SK-MEL-5 (cell line): ENCODE measurements at regions of chr17 and their contacts with region 1.

Region 1: GRCh38 chr17:78013683-78014467 is 55.4 kb downstream of the TNRC6C start:
- DNase-seq: peak; percentile 91

Region 2: DNA sequence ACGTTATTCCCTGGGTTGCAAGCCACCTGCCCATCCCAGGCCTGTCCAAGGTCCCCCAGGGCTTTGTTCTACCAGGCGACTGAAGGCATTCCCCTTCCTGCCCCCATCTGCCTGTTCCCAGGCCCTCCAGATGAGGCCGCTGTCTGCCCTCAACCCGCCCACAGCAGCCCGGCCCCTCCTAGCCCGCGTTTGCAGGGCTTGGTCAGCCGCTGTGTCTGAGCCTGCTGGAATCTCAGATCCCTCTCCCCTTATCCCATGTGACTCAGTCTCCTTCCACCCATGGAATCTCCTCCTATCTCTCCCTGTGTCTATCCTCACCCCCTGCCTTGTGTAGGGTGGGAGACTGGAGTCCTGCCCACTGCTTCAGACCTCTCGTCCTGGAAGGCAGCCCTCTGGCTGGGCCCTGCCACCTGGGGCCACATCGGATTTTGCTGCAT is 241.4 kb before region 1 on chr17:
- in situ Hi-C with region 1: loop called (anchors 25 kb)
- DNase-seq: peak; percentile 89

Region 3: DNA sequence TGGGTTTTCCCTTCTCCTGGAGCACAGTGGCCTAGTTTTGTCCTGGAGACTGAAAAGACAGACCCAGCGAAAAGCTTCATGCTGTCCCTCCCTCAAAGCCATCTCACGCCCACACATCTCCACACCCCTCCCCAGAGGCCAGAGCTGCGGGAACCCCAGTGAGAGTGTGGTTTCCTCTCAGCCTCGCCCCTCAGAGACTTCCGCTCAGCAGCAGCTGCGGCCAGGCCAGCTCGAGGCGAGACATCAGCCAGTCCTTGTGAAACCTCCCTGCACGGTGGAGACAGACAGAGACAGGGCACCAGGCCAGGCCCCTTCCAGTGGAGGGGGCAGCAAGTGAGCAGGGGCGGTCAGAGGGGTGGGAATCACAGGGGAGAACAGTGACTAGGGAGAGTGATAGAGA is 132.3 kb before region 1 on chr17:
- in situ Hi-C with region 1: loop called (anchors 25 kb)
- DNase-seq: peak; percentile 26

Region 4: DNA sequence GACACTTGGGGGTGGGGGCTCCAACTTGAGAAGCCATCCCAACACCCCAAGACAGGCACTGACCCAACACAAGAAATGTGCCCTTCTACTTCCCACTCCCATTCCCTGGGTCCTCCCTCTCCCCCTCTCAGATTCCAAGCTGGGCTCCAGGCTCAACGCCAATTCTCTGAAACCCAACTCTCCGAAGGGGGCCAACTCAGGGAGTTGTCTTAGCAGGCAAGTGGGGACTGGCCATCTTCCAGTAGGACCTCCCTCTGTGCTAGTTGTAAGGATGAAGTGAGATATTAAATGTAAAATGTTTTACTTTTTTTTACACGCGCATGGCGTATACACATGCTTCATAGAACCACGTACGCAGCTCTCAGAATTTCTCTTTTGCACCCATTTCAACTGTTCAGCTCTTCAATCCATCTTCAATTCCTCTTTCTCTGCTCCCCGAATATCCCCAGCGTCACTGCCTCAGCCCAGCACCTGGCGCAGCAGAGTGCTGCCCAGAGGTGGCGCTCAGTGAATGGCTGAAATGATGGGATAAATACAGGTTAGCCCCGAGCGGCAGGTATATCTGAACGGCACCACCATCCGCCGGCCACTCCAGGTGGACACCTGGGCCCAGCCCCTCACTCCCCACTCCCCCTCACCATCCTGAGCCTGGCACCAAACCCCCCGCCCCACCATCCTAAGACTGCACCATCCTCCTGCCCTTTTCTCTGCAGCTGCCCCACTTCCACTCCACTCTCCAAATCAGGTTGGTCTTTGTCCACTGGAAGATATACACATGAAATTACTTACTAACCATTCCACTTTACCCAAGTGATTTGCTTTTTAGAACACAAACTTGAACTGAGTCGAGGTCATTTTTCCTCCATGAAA is 99.3 kb before region 1 on chr17:
- in situ Hi-C with region 1: no loop called
- DNase-seq: peak; percentile 45

Region 5: DNA sequence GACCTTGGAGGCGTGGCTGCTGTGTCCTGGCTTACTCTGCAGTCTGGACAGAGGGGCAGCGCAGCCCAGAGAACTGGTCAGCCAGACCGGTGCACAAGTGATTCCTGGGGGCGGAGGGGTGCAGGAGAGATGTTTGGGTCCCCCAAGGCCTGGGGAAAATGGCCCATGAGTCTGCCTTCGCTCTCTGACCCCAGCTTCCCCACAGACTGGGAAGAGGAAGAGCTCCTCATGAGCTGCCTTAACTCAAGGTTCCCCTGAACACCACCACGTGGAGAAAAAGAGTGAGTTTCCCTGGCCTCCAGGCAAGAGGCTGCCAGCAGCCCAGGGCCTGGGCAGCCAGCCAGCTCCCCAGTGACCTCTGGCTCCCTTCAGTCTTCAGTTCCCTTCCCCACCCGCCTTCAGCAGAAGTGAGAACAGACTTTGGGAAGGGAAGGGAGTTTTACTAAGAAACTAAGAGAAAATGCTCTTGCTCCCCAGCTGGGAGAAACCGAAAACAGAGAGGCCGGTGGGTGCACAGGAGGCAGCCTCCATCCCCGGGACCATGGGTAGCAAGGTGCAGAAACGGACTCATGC is 130.4 kb after region 1 on chr17:
- in situ Hi-C with region 1: no loop called
- DNase-seq: peak; percentile 69